PC-3 (cell line): ENCODE measurements at regions of chr5 and their contacts with region 1.

Region 1: GRCh38 chr5:34898258-34898895 is 16.9 kb downstream of the RAD1 start:
- DNase-seq: peak; percentile 80
- ATAC-seq: peak; percentile 96
- H3K4me3 ChIP-seq: no peak overlapping the region
- H3K27ac ChIP-seq: no peak overlapping the region
- H3K4me1 ChIP-seq: peaks cover 14% of the 10 kb centered on the region
- H3K27me3 ChIP-seq: no peaks in the 10 kb centered on the region
- CTCF ChIP-seq: peak; percentile 93

Region 2: DNA sequence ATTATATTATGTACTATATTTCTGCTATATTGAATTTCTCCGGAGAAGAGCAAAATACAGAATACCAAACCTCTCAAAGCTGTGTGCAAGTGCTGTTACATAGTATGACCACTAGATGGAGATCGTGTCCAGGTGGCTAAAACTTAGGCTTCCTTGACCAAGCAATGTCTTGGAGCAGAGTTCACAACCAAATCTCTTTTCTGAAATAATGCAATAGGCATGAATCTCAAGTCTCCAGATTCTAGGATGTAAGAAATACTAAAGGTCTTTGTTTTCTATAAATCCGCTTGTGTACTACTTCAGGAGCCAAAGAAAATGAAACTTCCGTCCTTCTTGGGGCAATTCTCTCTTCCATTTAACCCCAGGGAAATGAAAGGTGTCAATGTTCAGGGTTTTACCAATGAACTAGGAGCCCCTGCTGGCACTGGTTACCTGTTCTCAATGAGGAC is 423.8 kb before region 1 on chr5:
- CTCF ChIA-PET with region 1: interaction called, 3 read pairs
- POLR2A ChIA-PET with region 1: no interaction called
- intact Hi-C with region 1: loop called (anchors 1 kb)
- DNase-seq: peak; percentile 73
- ATAC-seq: peak; percentile 84
- H3K4me3 ChIP-seq: no peak overlapping the region
- H3K27ac ChIP-seq: no peak overlapping the region
- H3K4me1 ChIP-seq: peaks cover 4% of the 10 kb centered on the region; the same call in 1 of the 2 replicates
- H3K27me3 ChIP-seq: no peaks in the 10 kb centered on the region
- CTCF ChIP-seq: peak; percentile 97